ENCODE measurements at regions of chr1 and their contacts with region 1.

Region 1: DNA sequence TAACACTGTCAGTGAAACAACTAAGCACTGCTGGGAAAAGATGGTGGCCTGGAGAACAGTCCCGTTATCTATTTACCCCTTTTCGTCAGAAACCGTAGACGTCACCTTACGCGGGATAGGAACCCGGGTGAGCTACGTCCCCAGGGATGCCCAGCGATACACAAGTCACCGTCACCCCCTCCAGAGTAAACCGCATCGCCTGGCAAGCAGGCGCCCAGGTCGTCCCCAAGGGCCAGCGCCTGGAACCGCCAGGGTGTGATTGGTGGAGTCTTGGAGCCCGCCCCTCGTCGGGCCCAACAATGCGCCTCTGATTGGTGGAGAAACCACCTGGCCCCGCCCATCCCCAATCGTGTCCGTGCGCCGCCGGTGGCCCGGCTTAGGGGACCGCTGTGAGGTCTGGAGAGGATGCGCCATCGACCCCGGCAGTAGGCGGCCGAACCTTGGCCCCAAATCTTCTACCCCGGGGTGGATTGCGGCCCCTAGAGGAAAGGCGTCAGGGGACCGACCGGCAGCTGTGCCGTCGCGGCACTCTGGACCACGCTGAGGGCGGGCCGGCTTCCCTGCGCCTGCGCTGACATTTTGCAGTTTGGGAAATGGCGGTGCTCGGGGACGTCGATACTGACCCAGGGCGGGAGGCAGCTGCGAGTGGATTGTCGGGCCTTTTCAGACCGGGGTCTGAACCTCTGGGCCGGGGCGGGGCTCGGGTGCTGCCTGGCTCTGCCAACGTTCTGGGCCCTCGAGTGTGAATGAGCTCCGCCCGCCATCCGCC is 34.4 kb downstream of the SLC2A1 start:
- DNase-seq: peak; percentile 75
- ATAC-seq: peak; percentile 93
- H3K4me3 ChIP-seq: peak overlapping the region; percentile 67
- H3K27ac ChIP-seq: peak overlapping the region; percentile 72
- H3K4me1 ChIP-seq: peaks cover 3% of the 10 kb centered on the region
- H3K27me3 ChIP-seq: no peaks in the 10 kb centered on the region
- CTCF ChIP-seq: peak; percentile 27; the same call in 1 of the 2 replicates
- POLR2A ChIP-seq: peak; percentile 60
- RAD21 ChIP-seq: no peak

Region 2: GRCh38 chr1:42380586-42381279 is 543.5 kb before region 1 on chr1 and contains the start of gene RIMKLA:
- CTCF ChIA-PET with region 1: no interaction called
- POLR2A ChIA-PET with region 1: no interaction called
- dilution Hi-C with region 1: no loop called
- in situ Hi-C with region 1: no loop called
- intact Hi-C with region 1: no loop called
- DNase-seq: peak; percentile 6
- ATAC-seq: peak; percentile 96
- H3K4me3 ChIP-seq: peak within 1 kb of the TSS; percentile 40
- H3K27ac ChIP-seq: no peak within 1 kb of the TSS
- H3K4me1 ChIP-seq: peaks cover 2% of the 10 kb centered on the region; the same call in 1 of the 2 replicates
- H3K27me3 ChIP-seq: peaks cover 15% of the 10 kb centered on the region
- CTCF ChIP-seq: no peak
- POLR2A ChIP-seq: no peak
- RAD21 ChIP-seq: no peak
- total RNA-seq, gene RIMKLA: not detected in 2 replicates

Region 3: GRCh38 chr1:42723501-42723900 is 200.8 kb before region 1 on chr1:
- CTCF ChIA-PET with region 1: no interaction called
- POLR2A ChIA-PET with region 1: no interaction called
- dilution Hi-C with region 1: no loop called
- in situ Hi-C with region 1: no loop called
- intact Hi-C with region 1: no loop called
- DNase-seq: no peak
- ATAC-seq: no peak
- H3K4me3 ChIP-seq: no peak overlapping the region
- H3K27ac ChIP-seq: no peak overlapping the region
- H3K4me1 ChIP-seq: no peaks in the 10 kb centered on the region
- H3K27me3 ChIP-seq: no peaks in the 10 kb centered on the region
- CTCF ChIP-seq: no peak
- POLR2A ChIP-seq: no peak
- RAD21 ChIP-seq: no peak

Region 4: DNA sequence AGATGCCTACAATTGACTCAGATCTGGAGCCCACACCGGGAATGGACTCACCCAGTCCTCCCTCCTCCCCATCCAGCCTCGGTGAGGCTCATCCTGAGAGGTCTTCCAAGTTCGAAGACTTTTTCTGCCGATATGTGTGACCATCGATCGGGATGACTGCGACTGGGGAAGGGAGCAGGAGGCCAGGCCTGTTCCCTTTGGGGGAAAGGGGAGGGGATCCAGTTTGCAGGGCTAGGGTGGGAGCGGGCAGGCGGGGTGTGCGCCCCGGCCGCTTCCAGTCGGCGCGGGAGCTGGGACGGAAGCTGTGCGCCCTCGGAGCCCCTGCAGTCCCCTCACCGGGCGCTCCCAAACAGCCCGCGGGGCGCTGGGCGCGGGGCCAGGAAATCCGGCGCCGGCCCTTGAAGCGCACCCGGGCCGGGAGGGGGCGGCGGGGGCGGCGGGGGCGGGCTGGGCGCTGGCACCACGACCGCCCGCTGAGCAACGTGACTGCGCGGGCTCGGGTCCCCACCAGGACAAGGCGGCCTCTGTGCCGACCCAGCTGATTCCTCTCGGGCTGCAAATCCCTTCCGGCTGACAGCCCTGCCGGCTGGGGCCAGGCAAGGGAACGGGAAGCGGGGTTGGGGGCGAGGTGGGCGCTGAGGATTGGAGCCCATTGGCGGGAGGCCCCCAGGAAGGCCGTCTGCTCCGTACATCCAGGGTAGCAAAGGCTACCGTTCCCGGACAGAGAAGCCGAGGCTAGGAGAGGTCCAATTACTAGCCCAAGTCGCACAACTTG is 143.9 kb after region 1 on chr1:
- CTCF ChIA-PET with region 1: interaction called, 29 read pairs
- POLR2A ChIA-PET with region 1: no interaction called
- dilution Hi-C with region 1: no loop called
- in situ Hi-C with region 1: loop called (anchors 5 kb)
- intact Hi-C with region 1: loop called (anchors 2 kb)
- DNase-seq: no peak
- ATAC-seq: peak; percentile 35
- H3K4me3 ChIP-seq: no peak overlapping the region
- H3K27ac ChIP-seq: no peak overlapping the region; the same call in 1 of the 2 replicates
- H3K4me1 ChIP-seq: peaks cover 13% of the 10 kb centered on the region
- H3K27me3 ChIP-seq: 0 out of 2 replicates have a peak, but pooled peaks cover 1% of the 10 kb centered on the region
- CTCF ChIP-seq: no peak
- POLR2A ChIP-seq: no peak
- RAD21 ChIP-seq: no peak

Measured in IMR-90 (cell line).